Activated CD4-positive, alpha-beta T cell treated with anti-CD3 and anti-CD28 coated beads for 36 hours (primary cell): ENCODE measurements at regions of chr17 and their contacts with region 1.

Region 1: GRCh38 chr17:57899428-57900224 is 49.8 kb upstream of the MRPS23 start:
- DNase-seq: no peak
- ATAC-seq: no peak
- H3K4me3 Mint-ChIP-seq: no peak overlapping the region
- H3K27ac Mint-ChIP-seq: no peak overlapping the region
- H3K4me1 Mint-ChIP-seq: peaks cover 3% of the 10 kb centered on the region
- H3K27me3 Mint-ChIP-seq: no peaks in the 10 kb centered on the region

Region 2: DNA sequence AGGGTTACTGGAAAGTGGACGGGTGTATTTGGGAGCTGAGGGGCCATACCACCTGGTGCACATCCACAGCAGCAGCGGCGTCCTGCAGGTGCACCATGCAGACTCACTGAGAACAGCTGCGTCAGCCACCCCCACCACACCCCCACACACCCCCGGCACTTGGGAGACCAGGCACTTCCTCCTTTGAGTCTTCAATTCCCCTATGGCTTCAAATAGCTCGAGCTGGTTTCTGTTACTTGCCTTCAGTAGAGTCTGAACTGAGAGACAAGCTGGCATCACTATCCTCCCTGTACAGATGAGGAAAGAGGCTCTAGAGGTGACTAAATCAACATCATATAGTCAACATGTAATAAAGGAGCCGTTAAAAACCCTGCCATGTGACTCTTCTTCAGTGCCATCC is 40.2 kb after region 1 on chr17:
- CTCF ChIA-PET with region 1: interaction called, 3 read pairs
- POLR2A ChIA-PET with region 1: interaction called, 12 read pairs
- intact Hi-C with region 1: no loop called
- DNase-seq: peak; percentile 27
- ATAC-seq: peak; percentile 52
- H3K4me3 Mint-ChIP-seq: no peak overlapping the region
- H3K27ac Mint-ChIP-seq: no peak overlapping the region
- H3K4me1 Mint-ChIP-seq: peaks cover 21% of the 10 kb centered on the region
- H3K27me3 Mint-ChIP-seq: peaks cover 13% of the 10 kb centered on the region